ENCODE measurements at regions of chr11 and their contacts with region 1.

Region 1: DNA sequence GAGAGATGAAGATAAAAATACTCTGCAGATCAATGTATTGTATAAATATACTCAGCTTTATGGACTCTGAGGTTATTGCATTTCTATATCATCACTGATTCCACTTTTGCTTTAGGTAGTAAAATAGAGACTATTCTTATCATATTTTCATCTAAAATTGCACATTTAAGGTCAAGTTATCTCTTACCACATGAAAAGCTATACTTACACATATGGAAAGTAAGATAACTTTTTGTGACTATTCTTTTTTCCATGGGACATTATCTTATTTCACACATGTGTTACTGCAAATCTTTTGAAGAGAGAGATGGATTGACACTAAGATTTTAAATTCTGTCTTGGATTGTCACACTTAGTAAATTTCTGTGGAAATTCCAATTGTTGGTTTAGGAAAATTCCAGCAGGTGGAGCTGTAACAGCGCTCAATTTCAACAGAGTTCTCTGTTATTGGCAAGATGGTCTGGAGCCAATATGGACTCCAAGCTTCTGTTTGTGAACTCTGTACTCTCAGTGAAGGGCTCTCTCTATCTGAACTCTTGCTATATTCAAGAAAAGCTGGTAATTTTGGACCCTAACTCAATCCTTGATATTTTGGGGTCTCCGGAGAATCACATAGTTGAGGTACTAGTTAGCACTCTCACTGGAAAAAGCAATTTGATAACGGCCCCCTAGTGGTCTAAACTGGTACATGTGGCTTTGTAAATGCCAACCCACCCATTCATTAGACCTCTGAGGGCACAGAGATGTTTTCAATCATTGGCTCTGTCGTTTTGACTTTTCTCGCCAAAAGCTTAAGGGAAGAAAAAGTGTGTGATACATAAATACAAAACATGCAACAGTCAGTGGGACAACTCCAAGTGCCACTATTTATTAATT is 429.7 kb downstream of the ETS1 start:
- DNase-seq: peak in 2 of 5 donors; percentile 25 to 37
- ATAC-seq: peak; percentile 58 to 84 (median 82)
- H3K4me3 ChIP-seq: peak overlapping the region in 6 of 12 donors; percentile 16 to 34 (median 26)
- H3K27ac ChIP-seq: no peak overlapping the region
- H3K4me1 ChIP-seq: peaks cover 0 to 11% (median 0%) of the 10 kb centered on the region in 12 donors
- H3K27me3 ChIP-seq: no peaks in the 10 kb centered on the region
- CTCF ChIP-seq: peak; percentile 71 to 95 (median 88)
- POLR2A ChIP-seq: no peak

Region 2: DNA sequence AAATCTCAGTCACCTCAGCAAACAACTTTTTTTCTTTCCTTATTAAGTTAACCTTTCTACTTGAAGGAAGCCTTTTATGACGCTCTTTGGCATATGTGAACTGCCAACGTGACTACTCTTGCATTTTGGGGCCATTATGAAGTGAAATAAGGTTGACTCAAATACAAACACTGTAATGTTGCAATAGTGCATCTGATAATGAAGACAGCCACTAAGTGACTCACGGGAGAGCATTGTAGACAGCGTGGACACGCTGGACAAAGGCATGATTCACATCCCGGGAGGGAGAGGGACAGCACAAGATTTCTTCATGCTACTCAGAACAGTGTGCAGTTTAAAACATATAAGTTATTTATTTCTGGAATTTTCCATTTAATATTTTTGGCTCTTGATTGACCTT is 131.1 kb before region 1 on chr11:
- intact Hi-C with region 1: loop called in 9 of 10 experiments (anchors 1 to 5 kb)
- DNase-seq: no peak
- ATAC-seq: peak in 2 of 4 donors; percentile 42 to 49
- H3K4me3 ChIP-seq: no peak overlapping the region
- H3K27ac ChIP-seq: no peak overlapping the region
- H3K4me1 ChIP-seq: peaks cover 0 to 7% (median 0%) of the 10 kb centered on the region in 12 donors
- H3K27me3 ChIP-seq: peaks cover 0 to 4% (median 0%) of the 10 kb centered on the region in 9 donors
- CTCF ChIP-seq: no peak
- POLR2A ChIP-seq: no peak

Region 3: DNA sequence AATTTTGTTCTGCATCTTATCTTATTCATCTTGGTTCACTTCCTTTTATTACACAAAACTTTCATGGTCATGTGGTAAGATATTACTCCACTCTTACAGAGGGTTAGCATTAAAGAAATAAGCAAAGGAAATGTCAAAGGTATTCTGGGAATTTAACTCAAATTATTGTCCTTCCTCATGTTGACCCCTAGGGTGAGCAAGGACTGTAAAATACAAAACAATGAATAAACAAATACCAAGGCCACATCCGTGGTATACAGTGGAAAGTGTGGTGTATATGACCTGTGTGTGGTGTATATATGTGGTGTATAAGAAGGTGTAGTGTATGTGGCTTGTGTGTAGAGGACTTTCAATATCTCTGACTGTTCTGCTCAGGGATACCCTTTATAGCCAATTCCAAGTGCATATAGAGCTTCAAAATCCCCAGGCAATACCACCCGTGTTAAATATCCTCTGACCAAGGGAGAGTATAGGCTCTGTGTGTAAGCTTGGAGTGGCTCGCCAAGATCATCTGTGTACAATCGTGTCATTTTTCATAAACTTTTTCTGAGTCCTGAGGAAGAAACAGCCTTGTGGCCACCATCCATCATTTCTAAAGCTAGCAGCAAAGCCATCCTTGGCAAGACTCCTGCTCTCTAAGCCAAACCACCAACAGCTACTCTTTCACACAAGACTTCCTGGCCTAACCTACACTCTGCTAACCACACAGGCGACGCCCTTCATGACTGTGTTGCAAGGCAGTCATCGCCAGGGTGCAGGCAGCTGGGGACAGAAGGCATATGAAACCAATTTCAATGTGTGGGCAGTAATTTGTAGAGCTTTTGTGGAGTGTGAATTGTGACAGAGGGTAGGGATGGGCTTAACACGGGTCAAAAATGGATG is 118.3 kb before region 1 on chr11:
- intact Hi-C with region 1: loop called in 7 of 10 experiments (anchors 5 kb)
- DNase-seq: peak in 4 of 5 donors; percentile 23 to 74 (median 32)
- ATAC-seq: peak in 3 of 4 donors; percentile 66 to 92 (median 78)
- H3K4me3 ChIP-seq: peak overlapping the region in 1 of 12 donors; percentile 19
- H3K27ac ChIP-seq: peak overlapping the region in 1 of 12 donors; percentile 72
- H3K4me1 ChIP-seq: peaks cover 0 to 39% (median 0%) of the 10 kb centered on the region in 12 donors
- H3K27me3 ChIP-seq: peaks cover 0 to 15% (median 0%) of the 10 kb centered on the region in 9 donors
- CTCF ChIP-seq: peak in 2 of 12 donors; percentile 7 to 16
- POLR2A ChIP-seq: no peak

Region 4: GRCh38 chr11:128342511-128343134 is 185.0 kb after region 1 on chr11:
- intact Hi-C with region 1: no loop called
- DNase-seq: peak in 4 of 5 donors; percentile 64 to 81 (median 70)
- ATAC-seq: peak; percentile 88 to 93 (median 93)
- H3K4me3 ChIP-seq: no peak overlapping the region
- H3K27ac ChIP-seq: peak overlapping the region; percentile 11 to 89 (median 73)
- H3K4me1 ChIP-seq: peaks cover 0 to 40% (median 21%) of the 10 kb centered on the region in 12 donors
- H3K27me3 ChIP-seq: no peaks in the 10 kb centered on the region
- CTCF ChIP-seq: no peak
- POLR2A ChIP-seq: no peak

Region 5: GRCh38 chr11:128379587-128380580 is 222.2 kb after region 1 on chr11:
- intact Hi-C with region 1: no loop called
- DNase-seq: no peak
- ATAC-seq: no peak
- H3K4me3 ChIP-seq: no peak overlapping the region
- H3K27ac ChIP-seq: no peak overlapping the region
- H3K4me1 ChIP-seq: no peaks in the 10 kb centered on the region
- H3K27me3 ChIP-seq: no peaks in the 10 kb centered on the region
- CTCF ChIP-seq: no peak
- POLR2A ChIP-seq: no peak